ENCODE measurements at regions of chr17 and their contacts with region 1.

Region 1: DNA sequence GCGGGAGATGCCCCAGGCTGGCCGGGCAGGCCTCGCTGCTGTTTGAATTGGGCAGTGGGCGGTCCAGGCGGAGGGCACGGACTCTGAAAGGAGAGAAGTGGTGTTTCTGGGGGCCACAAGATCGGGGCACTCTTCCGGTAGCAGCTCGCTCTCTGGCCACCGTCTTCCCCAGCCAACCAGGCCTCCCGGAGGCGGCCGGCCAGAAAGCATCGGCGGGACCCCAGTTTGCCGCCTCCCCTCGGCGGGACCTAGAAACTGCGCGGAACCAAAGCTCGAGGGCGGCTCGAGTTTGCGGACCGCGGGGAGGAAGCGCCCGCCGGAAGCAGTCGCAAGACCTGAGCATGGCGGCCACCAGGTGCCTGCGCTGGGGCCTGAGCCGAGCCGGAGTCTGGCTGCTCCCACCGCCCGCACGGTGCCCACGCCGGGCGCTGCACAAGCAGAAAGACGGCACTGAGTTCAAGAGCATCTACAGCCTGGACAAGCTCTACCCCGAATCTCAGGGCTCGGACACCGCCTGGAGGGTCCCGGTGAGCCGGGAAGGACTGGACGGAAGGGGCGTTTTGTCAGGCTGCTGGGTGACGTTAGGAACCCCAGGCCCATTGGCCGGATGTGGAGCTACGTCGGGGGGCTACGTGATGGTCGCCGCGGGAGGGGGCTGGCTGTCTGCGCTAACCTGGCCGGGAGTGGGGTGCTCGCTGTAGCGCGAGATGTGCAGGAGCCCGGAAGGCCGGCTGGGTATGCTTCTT is at the start of gene MRPL58:
- DNase-seq: peak; percentile 89 to 92 (median 90)
- ATAC-seq: peak; percentile 97
- H3K4me3 ChIP-seq: peak within 1 kb of the TSS; percentile 85
- H3K27ac ChIP-seq: peak within 1 kb of the TSS; percentile 82
- H3K4me1 ChIP-seq: peaks cover 9 to 10% of the 10 kb centered on the region in 2 experiments; a peak in 4 of 5 replicates
- H3K27me3 ChIP-seq: no peaks in the 10 kb centered on the region
- CTCF ChIP-seq: peak; percentile 42 to 79 (median 51); a peak in 5 of 6 replicates
- EP300 ChIP-seq: peak; percentile 40; the same call in 1 of the 2 replicates
- POLR2A ChIP-seq: peak; percentile 91
- RAD21 ChIP-seq: peak; percentile 19 to 45; a peak in 3 of 4 replicates
- polyA plus RNA-seq, gene MRPL58: 30.8 to 49.6 TPM

Region 2: GRCh38 chr17:74987418-74987908 is 25.1 kb before region 1 on chr17 and contains the start of gene CDR2L:
- CTCF ChIA-PET with region 1: no interaction called
- POLR2A ChIA-PET with region 1: interaction called, 18 read pairs
- in situ Hi-C with region 1: no loop called
- intact Hi-C with region 1: no loop called
- DNase-seq: peak; percentile 96 to 97 (median 96)
- ATAC-seq: peak; percentile 95
- H3K4me3 ChIP-seq: peak within 1 kb of the TSS; percentile 83
- H3K27ac ChIP-seq: peak within 1 kb of the TSS; percentile 75
- H3K4me1 ChIP-seq: peaks cover 12 to 38% of the 10 kb centered on the region in 2 experiments; a peak in 4 of 5 replicates
- H3K27me3 ChIP-seq: no peaks in the 10 kb centered on the region
- CTCF ChIP-seq: peak in 1 of 3 experiments; percentile 23; a peak in 1 of 6 replicates
- EP300 ChIP-seq: no peak
- POLR2A ChIP-seq: peak; percentile 57
- RAD21 ChIP-seq: no peak
- polyA plus RNA-seq, gene CDR2L: 5.3 to 8.2 TPM

Region 3: DNA sequence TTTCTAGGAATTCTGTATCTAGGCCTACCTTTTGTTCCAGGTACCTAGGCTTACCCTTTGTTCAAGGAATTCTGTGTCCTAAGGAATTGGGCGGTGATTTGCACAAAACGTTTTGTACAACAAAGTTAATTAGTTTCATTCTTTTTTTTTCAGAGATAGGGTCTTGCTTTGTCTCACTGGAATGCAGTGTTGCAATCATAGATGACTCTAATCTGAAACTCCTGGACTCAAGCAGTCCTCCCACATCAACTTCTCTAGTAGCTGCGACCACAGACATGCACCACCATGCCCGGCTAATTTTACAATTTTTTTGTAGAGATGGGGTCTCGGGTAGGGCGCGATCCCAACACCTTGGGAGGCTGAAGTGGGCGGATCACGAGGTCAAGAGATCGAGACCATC is 18.0 kb before region 1 on chr17:
- CTCF ChIA-PET with region 1: no interaction called
- POLR2A ChIA-PET with region 1: interaction called, 16 read pairs
- in situ Hi-C with region 1: no loop called
- intact Hi-C with region 1: no loop called
- DNase-seq: no peak
- ATAC-seq: no peak
- H3K4me3 ChIP-seq: no peak overlapping the region
- H3K27ac ChIP-seq: no peak overlapping the region
- H3K4me1 ChIP-seq: peaks cover 0 to 15% of the 10 kb centered on the region in 2 experiments; a peak in 3 of 5 replicates
- H3K27me3 ChIP-seq: no peaks in the 10 kb centered on the region
- CTCF ChIP-seq: no peak
- EP300 ChIP-seq: no peak
- POLR2A ChIP-seq: no peak
- RAD21 ChIP-seq: no peak

Region 4: DNA sequence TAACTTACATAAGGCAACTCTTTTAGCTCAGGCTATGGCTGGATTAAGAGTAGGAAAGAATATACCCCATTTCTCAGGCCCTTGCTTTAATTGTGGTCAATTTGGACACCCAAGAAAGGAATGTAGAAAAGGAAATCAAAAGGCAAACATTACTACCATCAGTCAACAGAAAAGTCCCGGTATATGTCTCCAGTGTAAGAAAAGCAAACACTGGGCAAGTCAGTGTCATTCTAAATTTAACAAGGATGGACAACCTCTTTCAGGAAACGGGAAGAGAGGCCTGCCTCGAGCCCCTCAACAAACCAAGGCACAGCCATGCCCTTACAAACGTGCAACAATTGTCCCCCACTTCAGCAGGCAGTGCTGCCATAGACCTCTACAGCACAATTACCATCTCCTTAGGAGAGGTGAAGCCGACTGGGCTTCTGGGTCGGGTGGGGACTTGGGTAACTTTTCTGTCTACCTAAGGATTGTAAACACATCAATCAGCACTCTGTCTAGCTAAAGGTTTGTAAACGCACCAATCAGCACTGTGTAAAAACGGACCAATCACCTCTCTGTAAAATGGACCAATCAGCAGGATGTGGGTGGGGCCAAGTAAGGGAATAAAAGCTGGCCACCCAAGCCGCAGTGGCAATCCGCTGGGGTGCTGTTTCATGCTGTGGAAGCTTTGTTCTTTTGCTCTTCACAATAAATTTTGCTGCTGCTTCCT is 12.3 kb after region 1 on chr17:
- CTCF ChIA-PET with region 1: no interaction called
- POLR2A ChIA-PET with region 1: interaction called, 22 read pairs
- in situ Hi-C with region 1: no loop called
- intact Hi-C with region 1: no loop called
- DNase-seq: no peak
- ATAC-seq: no peak; the same call in 2 of the 3 replicates
- H3K4me3 ChIP-seq: no peak overlapping the region
- H3K27ac ChIP-seq: no peak overlapping the region
- H3K4me1 ChIP-seq: peaks cover 0 to 7% of the 10 kb centered on the region in 2 experiments; a peak in 3 of 5 replicates
- H3K27me3 ChIP-seq: no peaks in the 10 kb centered on the region
- CTCF ChIP-seq: no peak
- EP300 ChIP-seq: no peak
- POLR2A ChIP-seq: no peak
- RAD21 ChIP-seq: no peak